ENCODE measurements at regions of chr5 and their contacts with region 1.

Region 1: DNA sequence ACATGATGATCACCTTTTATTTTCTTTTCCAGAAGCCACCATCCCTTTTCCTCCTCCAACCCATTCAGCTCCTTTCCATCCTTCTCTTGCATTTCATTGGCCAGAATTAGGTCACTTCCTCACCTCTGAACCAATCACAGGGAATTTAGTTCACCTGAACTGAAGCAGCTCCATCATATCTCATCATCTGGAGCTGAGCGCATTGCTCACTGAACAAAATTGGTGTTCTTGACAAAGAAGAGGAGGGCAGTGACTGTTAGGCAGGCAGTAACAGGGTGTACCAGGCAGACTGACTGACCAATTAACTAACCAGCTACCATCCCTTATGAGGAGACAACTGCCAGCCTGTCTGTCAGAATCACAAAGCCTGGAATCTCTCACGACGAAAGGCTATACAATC is 1.8 kb upstream of the ZNF354A start:
- DNase-seq: no peak
- H3K4me3 ChIP-seq: no peak overlapping the region
- H3K27ac ChIP-seq: no peak overlapping the region
- H3K4me1 ChIP-seq: no peaks in the 10 kb centered on the region
- H3K27me3 ChIP-seq: no peaks in the 10 kb centered on the region
- CTCF ChIP-seq: no peak
- POLR2A ChIP-seq: no peak

Region 2: GRCh38 chr5:178626484-178627258 is 105.6 kb before region 1 on chr5 and contains the start of gene CLK4:
- CTCF ChIA-PET with region 1: interaction called, 3 read pairs
- POLR2A ChIA-PET with region 1: no interaction called
- dilution Hi-C with region 1: no loop called
- intact Hi-C with region 1: loop called (anchors 1 kb)
- DNase-seq: peak; percentile 92
- H3K4me3 ChIP-seq: peak within 1 kb of the TSS; percentile 90 to 97 (median 93)
- H3K27ac ChIP-seq: peak within 1 kb of the TSS; percentile 61
- H3K4me1 ChIP-seq: peaks cover 9% of the 10 kb centered on the region
- H3K27me3 ChIP-seq: no peaks in the 10 kb centered on the region
- CTCF ChIP-seq: no peak
- POLR2A ChIP-seq: peak; percentile 91
- total RNA-seq, gene CLK4: 19.2 and 19.5 TPM in 2 replicates

Region 3: GRCh38 chr5:178695556-178695955 is 36.7 kb before region 1 on chr5:
- CTCF ChIA-PET with region 1: no interaction called
- POLR2A ChIA-PET with region 1: no interaction called
- dilution Hi-C with region 1: no loop called
- intact Hi-C with region 1: no loop called
- DNase-seq: no peak
- H3K4me3 ChIP-seq: no peak overlapping the region
- H3K27ac ChIP-seq: no peak overlapping the region
- H3K4me1 ChIP-seq: no peaks in the 10 kb centered on the region
- H3K27me3 ChIP-seq: no peaks in the 10 kb centered on the region
- CTCF ChIP-seq: no peak
- POLR2A ChIP-seq: no peak

Region 4: DNA sequence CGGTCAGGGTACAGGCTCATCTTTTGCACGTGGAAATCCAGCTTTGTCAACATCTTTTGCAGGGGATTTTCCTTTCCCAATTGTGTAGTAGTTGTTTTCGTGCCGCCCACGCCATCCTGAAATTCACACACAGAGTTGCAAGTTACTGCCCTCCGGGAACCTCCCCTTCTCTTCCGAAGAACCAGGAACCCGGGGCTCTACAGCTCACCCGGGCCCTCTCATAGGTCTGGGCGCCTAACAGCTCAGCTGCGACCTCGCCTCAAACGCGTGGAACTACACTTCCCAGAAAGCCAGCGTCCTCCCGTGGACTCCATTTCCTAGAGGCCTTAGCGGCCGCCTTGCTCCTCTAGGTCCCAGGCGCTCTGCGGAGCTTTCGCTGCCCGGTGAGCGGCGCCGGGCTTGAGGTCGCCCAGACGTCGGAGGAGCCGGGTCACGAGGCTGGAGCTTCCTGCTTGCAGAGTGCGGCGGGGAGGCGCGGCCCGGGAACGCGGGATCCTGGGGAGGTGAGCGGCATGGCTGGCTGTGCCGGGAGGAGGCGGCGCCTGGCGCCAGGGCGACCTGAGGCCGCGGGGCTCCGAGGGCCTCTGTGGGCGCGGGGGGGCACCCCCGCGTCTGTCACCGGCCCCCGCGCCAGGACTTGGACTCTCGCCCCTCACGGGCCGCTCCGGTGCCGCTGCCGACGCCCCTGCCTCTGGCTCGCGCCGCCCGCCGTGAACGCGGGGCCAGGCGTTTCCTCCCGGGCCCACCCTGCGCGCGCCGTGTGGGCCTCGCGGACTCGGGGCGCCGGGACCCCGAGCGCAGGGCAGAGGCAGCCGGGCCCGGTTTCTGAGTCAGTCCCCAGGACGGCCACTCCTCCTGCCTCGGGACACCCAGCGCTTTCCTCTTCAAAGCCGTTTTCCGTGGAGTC is 127.6 kb after region 1 on chr5 and contains the start of gene ZNF354B:
- CTCF ChIA-PET with region 1: interaction called, 26 read pairs
- POLR2A ChIA-PET with region 1: interaction called, 8 read pairs
- dilution Hi-C with region 1: no loop called
- intact Hi-C with region 1: loop called (anchors 1 kb)
- DNase-seq: peak; percentile 98
- H3K4me3 ChIP-seq: peak within 1 kb of the TSS; percentile 22 to 78 (median 38)
- H3K27ac ChIP-seq: peak within 1 kb of the TSS; percentile 53
- H3K4me1 ChIP-seq: no peaks in the 10 kb centered on the region
- H3K27me3 ChIP-seq: no peaks in the 10 kb centered on the region
- CTCF ChIP-seq: no peak
- POLR2A ChIP-seq: peak; percentile 63
- total RNA-seq, gene ZNF354B: 16.3 and 17.6 TPM in 2 replicates

Region 5: DNA sequence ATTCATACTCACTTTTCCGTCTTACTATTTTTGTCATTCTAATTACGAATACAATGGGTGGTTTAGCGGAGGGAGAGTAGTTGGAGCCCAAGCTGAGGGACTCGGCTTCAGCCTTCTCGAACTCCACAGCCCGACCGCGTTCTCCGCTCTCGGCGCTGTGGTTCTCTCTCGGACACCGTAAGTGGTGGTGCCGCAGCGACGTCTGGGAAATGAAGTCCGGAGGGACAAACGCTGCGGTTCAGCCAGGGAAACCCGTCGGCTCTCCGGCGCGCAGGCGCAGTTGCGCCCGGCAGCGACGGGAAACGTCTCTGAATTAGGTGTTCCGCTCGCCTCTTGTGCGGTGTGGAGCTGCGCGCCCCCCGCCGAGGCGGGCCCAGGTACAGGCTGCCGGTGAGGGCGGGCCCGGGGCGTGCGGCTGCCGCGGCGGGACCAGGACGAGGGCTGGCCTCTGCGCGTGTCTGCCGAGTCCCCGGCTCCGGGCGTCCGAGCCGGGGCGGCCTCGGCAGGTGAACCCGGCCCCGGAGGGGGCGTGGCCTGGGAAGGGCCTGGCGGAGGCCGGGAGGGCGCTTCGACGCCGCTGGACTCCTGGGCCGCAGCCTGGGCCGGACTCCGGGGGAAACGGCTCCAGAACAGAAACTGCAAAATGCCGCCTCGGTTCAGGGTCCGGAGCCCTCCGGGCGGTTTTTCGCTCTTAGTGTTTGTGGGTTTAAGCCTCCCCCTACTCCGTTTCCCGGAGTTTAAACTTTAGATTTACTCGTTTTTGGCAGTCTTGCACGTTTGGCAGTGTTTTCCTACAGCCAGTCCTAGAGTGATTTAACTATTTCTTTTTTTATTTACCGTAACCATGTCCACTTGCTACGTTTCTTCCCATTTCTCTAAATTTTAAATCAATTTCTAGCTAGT is 291.5 kb after region 1 on chr5 and contains the start of gene ZNF879:
- CTCF ChIA-PET with region 1: interaction called, 3 read pairs
- POLR2A ChIA-PET with region 1: no interaction called
- dilution Hi-C with region 1: no loop called
- intact Hi-C with region 1: loop called (anchors 1 kb)
- DNase-seq: peak; percentile 96
- H3K4me3 ChIP-seq: peak within 1 kb of the TSS; percentile 72 to 80 (median 77)
- H3K27ac ChIP-seq: peak within 1 kb of the TSS; percentile 25
- H3K4me1 ChIP-seq: peaks cover 9% of the 10 kb centered on the region
- H3K27me3 ChIP-seq: no peaks in the 10 kb centered on the region
- CTCF ChIP-seq: no peak
- POLR2A ChIP-seq: no peak
- total RNA-seq, gene ZNF879: 2.7 and 3.7 TPM in 2 replicates

Region 6: DNA sequence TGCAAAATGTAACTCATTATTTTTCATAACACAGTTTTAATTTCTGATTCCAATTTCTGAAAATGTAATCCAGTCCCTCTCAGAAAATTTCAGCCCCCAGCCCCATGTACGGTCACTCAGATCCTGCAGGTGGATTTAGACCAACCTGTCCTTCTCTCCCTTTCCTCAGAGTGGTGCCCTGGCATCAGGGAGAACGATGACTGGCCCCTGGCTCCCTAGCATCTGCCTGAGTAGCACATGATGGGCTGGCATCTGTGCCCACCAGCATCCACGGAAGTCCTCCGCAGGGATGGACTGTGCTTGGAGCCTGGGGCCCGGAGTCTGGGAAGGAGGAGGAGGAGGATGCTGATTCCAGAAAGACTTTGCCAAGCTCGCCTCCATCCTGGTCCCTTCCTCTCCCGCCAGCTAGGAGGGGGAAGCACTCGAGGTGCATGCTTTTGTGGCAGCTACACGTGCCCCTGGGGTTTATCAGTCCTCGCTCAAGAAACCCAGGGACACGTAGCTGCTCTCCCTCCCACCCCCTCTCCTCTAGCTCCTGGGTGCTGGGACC is 763.7 kb after region 1 on chr5:
- CTCF ChIA-PET with region 1: interaction called, 53 read pairs
- POLR2A ChIA-PET with region 1: no interaction called
- dilution Hi-C with region 1: no loop called
- intact Hi-C with region 1: loop called (anchors 1 kb)
- DNase-seq: no peak
- H3K4me3 ChIP-seq: no peak overlapping the region
- H3K27ac ChIP-seq: no peak overlapping the region
- H3K4me1 ChIP-seq: no peaks in the 10 kb centered on the region
- H3K27me3 ChIP-seq: no peaks in the 10 kb centered on the region
- CTCF ChIP-seq: no peak
- POLR2A ChIP-seq: no peak